GM13976 (cell line): ENCODE measurements at regions of chr16 and their contacts with region 1.

Region 1: GRCh38 chr16:81723098-81723723 is 55.9 kb upstream of the PLCG2 start:
- DNase-seq: peak; percentile 72
- CTCF ChIP-seq: peak; percentile 63

Region 2: DNA sequence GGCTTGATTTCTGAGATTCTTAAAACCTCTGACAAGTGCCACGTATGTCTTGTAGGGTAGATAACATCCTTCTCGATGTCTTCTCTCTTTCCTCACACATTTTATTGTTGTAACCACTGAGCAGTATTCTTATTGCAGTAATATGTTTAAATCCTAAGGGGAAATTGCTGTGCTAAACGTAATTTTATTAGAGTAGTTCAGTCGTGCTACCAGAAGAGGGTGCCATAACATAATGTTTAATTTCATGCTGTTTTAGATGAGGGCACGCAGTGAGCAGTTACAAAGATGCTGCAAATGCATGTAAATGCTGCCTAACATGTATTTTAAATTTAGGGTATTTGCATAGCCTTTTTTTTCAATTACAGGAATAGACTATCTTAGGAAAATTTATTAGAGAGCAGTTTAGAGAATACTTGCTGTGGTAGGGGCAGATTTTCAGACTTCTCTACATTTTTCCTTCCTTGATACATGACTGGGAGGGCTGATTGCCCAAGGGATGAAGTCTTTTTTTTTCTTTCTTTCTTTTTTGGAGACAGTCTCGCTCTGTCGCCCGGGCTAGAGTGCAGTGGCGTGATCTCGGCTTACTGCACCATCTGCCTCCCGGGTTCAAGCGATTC is 356.8 kb before region 1 on chr16:
- in situ Hi-C with region 1: loop called (anchors 10 kb)
- DNase-seq: peak; percentile 61
- CTCF ChIP-seq: peak; percentile 56

Region 3: GRCh38 chr16:81394966-81395651 is 328.1 kb before region 1 on chr16:
- in situ Hi-C with region 1: loop called (anchors 10 kb)
- DNase-seq: no peak
- CTCF ChIP-seq: no peak

Region 4: DNA sequence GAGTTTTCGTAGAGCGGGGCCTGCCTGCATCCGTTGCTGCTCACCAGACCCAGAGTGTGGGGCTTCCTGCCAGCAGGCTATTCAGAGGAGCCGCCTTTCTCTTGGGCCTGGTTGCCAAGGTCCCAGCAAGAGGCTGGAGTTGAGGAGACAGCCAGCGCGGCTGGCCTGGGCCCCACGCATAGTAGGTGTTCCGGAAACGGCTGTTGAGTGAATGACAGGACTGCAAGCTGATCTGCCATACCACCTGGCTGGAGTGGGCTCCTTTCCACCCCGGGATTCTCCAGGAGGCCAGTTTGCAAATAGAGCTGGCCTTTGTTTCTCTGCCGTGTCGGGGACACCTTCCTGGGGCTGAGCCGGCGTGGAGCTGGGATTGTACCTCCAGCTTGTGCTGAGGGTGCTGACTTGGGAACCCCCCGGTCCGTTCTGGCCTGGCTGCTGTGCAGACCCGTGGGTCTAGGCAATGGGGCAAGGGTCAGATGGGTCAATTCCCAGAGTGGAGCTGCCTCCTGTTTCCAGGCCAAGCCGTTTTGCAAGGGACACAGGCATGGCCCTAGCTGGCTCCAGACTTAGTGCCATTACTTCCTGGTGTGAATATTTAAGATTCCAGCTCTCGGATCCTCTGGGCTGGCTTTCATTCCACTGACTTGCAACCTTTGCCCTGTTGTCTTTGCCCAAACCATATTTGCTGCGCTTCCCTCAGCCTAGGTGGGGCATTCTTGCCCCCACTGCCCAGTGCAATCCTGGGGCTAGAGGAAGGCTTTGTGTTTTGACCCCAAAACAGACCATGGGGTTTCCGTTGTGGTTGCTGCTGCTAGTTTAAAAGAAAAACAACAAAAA is 209.8 kb before region 1 on chr16:
- in situ Hi-C with region 1: no loop called
- DNase-seq: no peak
- CTCF ChIP-seq: no peak

Region 5: GRCh38 chr16:81623363-81624102 is 99.7 kb before region 1 on chr16:
- in situ Hi-C with region 1: loop called (anchors 10 kb)
- DNase-seq: peak; percentile 74
- CTCF ChIP-seq: peak; percentile 38

Region 6: DNA sequence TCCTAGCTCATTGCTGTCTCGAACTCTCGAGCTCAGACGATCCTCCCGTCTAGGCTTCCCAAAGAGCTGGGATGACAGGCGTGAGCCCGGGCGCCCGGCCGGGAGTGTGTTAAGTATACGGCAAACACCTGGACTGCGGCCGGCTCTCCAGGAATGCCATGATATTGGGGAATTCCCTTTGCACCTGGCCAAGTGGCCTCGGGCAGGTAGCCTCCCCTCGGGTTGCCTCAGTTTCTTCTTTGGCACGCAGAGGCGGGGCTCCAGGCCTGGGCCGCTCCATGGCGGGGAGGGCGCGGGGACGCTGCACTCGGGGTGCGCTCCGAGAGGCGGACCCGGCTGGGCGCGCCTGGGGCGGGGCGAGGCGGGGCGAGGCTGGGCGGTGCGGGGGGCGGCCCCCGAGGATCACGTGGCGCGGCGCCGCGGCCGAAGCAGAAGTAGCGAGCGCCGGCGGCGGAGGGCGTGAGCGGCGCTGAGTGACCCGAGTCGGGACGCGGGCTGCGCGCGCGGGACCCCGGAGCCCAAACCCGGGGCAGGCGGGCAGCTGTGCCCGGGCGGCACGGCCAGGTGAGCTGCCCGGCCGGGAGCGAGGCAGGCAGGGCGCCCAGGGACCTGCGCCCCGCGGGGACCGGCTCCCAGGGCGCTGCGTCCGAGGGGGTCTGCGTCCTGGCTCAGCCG is 55.8 kb after region 1 on chr16 and contains the start of gene PLCG2:
- in situ Hi-C with region 1: no loop called
- DNase-seq: peak; percentile 94
- CTCF ChIP-seq: no peak

Region 7: DNA sequence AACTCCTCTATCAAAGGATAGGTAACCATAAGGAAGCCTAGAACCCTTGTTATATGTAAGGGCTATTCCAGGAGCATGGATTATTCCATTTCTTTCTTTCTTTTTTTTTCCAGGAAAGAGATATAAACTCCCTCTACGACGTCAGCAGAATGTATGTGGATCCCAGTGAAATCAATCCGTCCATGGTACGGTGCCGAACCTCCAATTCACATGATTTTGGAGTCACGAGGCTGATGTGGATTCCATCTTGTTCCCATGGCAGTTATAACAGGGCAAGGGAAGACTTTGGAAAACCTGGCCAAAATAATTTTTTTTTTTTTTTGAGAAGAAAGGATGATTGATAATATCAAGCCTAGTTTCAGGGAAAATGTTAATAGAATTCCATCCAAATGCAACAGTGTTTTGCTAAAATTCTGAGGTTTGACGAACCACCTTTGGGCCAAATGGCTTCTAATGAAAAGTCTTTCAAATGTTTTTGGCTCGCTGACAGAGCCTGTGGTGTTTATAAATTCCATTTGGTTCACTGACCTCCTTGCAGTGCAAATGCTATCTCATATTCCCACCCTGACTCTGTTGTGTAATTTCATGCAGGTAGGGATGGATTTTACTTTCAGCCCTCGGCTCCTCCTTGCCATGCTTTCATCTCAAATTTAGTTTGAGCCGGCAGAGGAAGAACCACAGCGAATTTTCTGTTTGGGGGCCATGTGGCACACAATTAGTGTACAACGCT is 198.0 kb after region 1 on chr16:
- in situ Hi-C with region 1: no loop called
- DNase-seq: no peak
- CTCF ChIP-seq: no peak

Region 8: GRCh38 chr16:81973737-81974136 is 250.5 kb after region 1 on chr16:
- in situ Hi-C with region 1: no loop called
- DNase-seq: no peak
- CTCF ChIP-seq: no peak